ENCODE measurements at regions of chr5 and their contacts with region 1.

Region 1: GRCh38 chr5:13478831-13479465 is 465.5 kb downstream of the DNAH5 start:
- DNase-seq: peak; percentile 39 to 60
- H3K4me3 ChIP-seq: no peak overlapping the region
- H3K4me3 Mint-ChIP-seq: no peak overlapping the region
- H3K27ac Mint-ChIP-seq: no peak overlapping the region
- H3K4me1 ChIP-seq: no peaks in the 10 kb centered on the region
- H3K4me1 Mint-ChIP-seq: no peaks in the 10 kb centered on the region
- H3K27me3 ChIP-seq: no peaks in the 10 kb centered on the region
- H3K27me3 Mint-ChIP-seq: peaks cover 3% of the 10 kb centered on the region
- CTCF ChIP-seq: peak; percentile 67 to 81

Region 2: DNA sequence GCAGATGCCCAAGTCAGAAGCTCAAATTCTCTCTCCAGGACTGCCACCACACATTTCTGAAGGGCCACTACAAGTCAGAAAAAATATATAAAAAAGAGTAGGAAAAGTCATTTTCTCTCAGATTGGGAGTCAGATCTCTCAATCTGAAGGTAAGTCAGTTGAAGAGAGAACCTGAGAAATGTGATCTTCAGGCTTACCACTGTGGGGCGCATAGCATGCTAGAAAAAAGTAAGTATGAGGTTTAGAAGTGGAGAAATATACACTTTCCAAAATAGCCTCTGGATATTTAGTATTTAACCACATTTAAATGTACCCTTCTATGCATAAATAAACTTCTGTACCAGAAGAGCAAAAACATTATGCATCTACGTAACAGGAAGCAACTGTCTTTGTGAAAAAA is 774.0 kb before region 1 on chr5:
- CTCF ChIA-PET with region 1: no interaction called
- POLR2A ChIA-PET with region 1: no interaction called
- intact Hi-C with region 1: loop called (anchors 1 kb)
- DNase-seq: peak in 1 of 2 experiments; percentile 7
- H3K4me3 ChIP-seq: no peak overlapping the region
- H3K4me3 Mint-ChIP-seq: no peak overlapping the region
- H3K27ac Mint-ChIP-seq: no peak overlapping the region
- H3K4me1 ChIP-seq: no peaks in the 10 kb centered on the region
- H3K4me1 Mint-ChIP-seq: no peaks in the 10 kb centered on the region
- H3K27me3 ChIP-seq: no peaks in the 10 kb centered on the region
- H3K27me3 Mint-ChIP-seq: no peaks in the 10 kb centered on the region
- CTCF ChIP-seq: peak in 1 of 2 experiments; percentile 54

Region 3: GRCh38 chr5:13218518-13218917 is 260.4 kb before region 1 on chr5:
- CTCF ChIA-PET with region 1: no interaction called
- POLR2A ChIA-PET with region 1: no interaction called
- intact Hi-C with region 1: loop called (anchors 1 kb)
- DNase-seq: peak in 1 of 2 experiments; percentile 6
- H3K4me3 ChIP-seq: no peak overlapping the region
- H3K4me3 Mint-ChIP-seq: no peak overlapping the region
- H3K27ac Mint-ChIP-seq: no peak overlapping the region
- H3K4me1 ChIP-seq: no peaks in the 10 kb centered on the region
- H3K4me1 Mint-ChIP-seq: no peaks in the 10 kb centered on the region
- H3K27me3 ChIP-seq: no peaks in the 10 kb centered on the region; the same call in 1 of the 2 replicates
- H3K27me3 Mint-ChIP-seq: peaks cover 3% of the 10 kb centered on the region
- CTCF ChIP-seq: peak; percentile 21 to 28

Region 4: DNA sequence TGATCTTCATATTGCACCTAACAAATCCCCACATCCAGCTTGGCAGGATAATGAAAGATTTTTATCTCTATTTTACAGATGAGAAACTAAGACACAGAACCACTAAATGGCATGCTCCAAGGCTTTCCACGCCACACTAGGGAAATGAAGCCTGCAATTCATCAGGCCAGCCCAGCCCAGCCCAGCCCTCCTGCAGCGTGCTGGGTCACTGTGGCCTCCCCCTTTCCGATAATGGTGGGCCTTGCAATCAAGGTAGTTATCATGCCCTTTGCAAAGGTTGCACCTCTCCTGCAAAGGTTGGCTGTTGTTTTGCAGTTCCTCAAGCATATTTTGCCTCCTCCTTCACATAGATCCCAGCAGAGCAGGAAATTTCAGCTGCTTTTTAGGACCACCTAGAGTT is 43.0 kb after region 1 on chr5:
- CTCF ChIA-PET with region 1: no interaction called
- POLR2A ChIA-PET with region 1: no interaction called
- intact Hi-C with region 1: no loop called
- DNase-seq: no peak
- H3K4me3 ChIP-seq: no peak overlapping the region
- H3K4me3 Mint-ChIP-seq: no peak overlapping the region
- H3K27ac Mint-ChIP-seq: no peak overlapping the region
- H3K4me1 ChIP-seq: peaks cover 15% of the 10 kb centered on the region
- H3K4me1 Mint-ChIP-seq: peaks cover 8% of the 10 kb centered on the region
- H3K27me3 ChIP-seq: no peaks in the 10 kb centered on the region
- H3K27me3 Mint-ChIP-seq: no peaks in the 10 kb centered on the region
- CTCF ChIP-seq: no peak

Region 5: GRCh38 chr5:13660072-13660471 is 181.1 kb after region 1 on chr5:
- CTCF ChIA-PET with region 1: interaction called, 8 read pairs
- POLR2A ChIA-PET with region 1: no interaction called
- intact Hi-C with region 1: loop called (anchors 5 kb)
- DNase-seq: peak in 1 of 2 experiments; percentile 12
- H3K4me3 ChIP-seq: no peak overlapping the region
- H3K4me3 Mint-ChIP-seq: no peak overlapping the region
- H3K27ac Mint-ChIP-seq: no peak overlapping the region
- H3K4me1 ChIP-seq: peaks cover under 1% of the 10 kb centered on the region; the same call in 1 of the 2 replicates
- H3K4me1 Mint-ChIP-seq: peaks cover 12% of the 10 kb centered on the region
- H3K27me3 ChIP-seq: no peaks in the 10 kb centered on the region
- H3K27me3 Mint-ChIP-seq: no peaks in the 10 kb centered on the region
- CTCF ChIP-seq: peak in 1 of 2 experiments; percentile 30